WTC11 (cell line): ENCODE measurements at regions of chr10 and their contacts with region 1.

Region 1: GRCh38 chr10:23158370-23158769 is 33.7 kb upstream of the PTF1A start:
- DNase-seq: peak; percentile 56
- ATAC-seq: peak; percentile 80
- H3K4me3 Mint-ChIP-seq: peak overlapping the region; percentile 59
- H3K27ac Mint-ChIP-seq: no peak overlapping the region
- H3K4me1 Mint-ChIP-seq: peaks cover 15% of the 10 kb centered on the region
- H3K27me3 Mint-ChIP-seq: peaks cover 16% of the 10 kb centered on the region
- CTCF ChIP-seq: peak; percentile 88; the same call in 1 of the 2 replicates

Region 2: GRCh38 chr10:23146258-23146657 is 12.1 kb before region 1 on chr10:
- CTCF ChIA-PET with region 1: interaction called, 10 read pairs
- POLR2A ChIA-PET with region 1: no interaction called
- DNase-seq: no peak
- ATAC-seq: peak; percentile 28; the same call in 1 of the 2 replicates
- H3K4me3 Mint-ChIP-seq: no peak overlapping the region
- H3K27ac Mint-ChIP-seq: no peak overlapping the region
- H3K4me1 Mint-ChIP-seq: no peaks in the 10 kb centered on the region
- H3K27me3 Mint-ChIP-seq: no peaks in the 10 kb centered on the region
- CTCF ChIP-seq: no peak

Region 3: DNA sequence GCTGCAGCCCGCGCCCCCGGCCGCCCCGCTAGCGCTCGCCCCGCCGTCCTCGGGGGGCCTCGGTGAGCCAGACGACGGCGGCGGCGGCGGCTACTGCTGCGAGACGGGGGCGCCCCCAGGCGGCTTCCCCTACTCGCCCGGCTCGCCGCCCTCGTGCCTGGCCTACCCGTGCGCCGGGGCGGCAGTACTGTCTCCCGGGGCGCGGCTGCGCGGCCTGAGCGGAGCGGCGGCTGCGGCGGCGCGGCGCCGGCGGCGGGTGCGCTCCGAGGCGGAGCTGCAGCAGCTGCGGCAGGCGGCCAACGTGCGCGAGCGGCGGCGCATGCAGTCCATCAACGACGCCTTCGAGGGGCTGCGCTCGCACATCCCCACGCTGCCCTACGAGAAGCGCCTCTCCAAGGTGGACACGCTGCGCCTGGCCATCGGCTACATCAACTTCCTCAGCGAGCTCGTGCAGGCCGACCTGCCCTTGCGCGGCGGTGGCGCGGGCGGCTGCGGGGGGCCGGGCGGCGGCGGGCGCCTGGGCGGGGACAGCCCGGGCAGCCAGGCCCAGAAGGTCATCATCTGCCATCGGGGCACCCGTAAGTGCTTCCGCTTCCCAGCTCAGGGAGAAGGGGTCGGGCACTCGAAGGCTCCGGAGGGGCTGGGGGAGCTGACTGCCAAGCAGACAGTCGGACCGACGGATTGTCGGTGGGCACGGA is 34.5 kb after region 1 on chr10:
- CTCF ChIA-PET with region 1: interaction called, 21 read pairs
- POLR2A ChIA-PET with region 1: no interaction called
- DNase-seq: peak; percentile 64
- ATAC-seq: peak; percentile 52
- H3K4me3 Mint-ChIP-seq: peak overlapping the region; percentile 51
- H3K27ac Mint-ChIP-seq: no peak overlapping the region
- H3K4me1 Mint-ChIP-seq: peaks cover 40% of the 10 kb centered on the region
- H3K27me3 Mint-ChIP-seq: peaks cover 98% of the 10 kb centered on the region
- CTCF ChIP-seq: no peak

Region 4: DNA sequence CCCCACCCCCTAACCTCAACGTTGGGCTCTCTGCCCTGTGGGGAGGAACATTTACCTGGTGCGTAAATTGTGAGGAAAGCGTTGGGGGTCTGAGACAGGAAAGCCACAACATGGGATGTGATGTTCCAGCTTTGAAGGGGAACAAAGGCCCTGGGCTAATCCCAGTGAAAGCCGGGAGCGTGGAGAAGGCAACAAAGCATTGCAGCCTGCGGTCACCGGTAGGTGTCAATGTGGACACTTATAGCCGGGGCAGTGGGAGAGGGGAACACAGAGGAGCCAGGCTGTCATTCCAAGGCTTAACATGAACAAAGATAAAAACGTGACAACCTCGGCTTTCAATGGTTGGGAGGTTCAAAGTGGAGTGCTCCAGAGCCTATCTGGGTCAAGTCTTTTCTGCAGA is 46.4 kb after region 1 on chr10:
- CTCF ChIA-PET with region 1: interaction called, 13 read pairs
- POLR2A ChIA-PET with region 1: no interaction called
- DNase-seq: peak; percentile 36
- ATAC-seq: peak; percentile 74
- H3K4me3 Mint-ChIP-seq: peak overlapping the region; percentile 30; the same call in 1 of the 2 replicates
- H3K27ac Mint-ChIP-seq: no peak overlapping the region
- H3K4me1 Mint-ChIP-seq: peaks cover 35% of the 10 kb centered on the region
- H3K27me3 Mint-ChIP-seq: peaks cover 67% of the 10 kb centered on the region
- CTCF ChIP-seq: no peak

Region 5: DNA sequence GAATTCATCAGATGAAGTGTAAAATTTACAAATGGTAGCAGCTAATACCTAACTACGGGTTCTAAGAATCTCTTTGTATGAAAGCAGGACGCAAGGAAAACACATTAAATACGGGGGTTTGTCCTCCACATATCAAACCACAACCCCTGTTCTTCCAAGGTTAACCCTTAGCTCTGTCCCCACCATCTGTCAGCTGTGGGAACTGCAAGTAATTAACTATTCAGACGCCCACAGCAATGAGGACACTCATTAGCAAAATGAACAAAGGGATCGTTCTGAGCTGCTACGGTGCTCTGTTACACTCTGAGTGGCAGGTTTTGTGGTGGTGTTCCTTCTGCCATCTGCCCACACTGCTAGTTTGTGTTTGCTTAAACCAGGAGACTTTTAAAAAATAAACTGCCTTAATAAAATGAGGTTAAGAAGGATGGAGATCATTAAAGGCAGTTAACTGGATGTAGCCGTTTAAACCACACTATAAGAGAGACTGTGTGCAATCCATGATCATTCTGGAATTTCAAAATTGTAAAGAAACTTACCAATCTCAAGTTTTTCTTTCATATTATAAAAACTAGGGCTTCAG is 134.9 kb after region 1 on chr10:
- CTCF ChIA-PET with region 1: interaction called, 86 read pairs
- POLR2A ChIA-PET with region 1: interaction called, 3 read pairs
- DNase-seq: peak; percentile 69
- ATAC-seq: peak; percentile 97
- H3K4me3 Mint-ChIP-seq: no peak overlapping the region
- H3K27ac Mint-ChIP-seq: no peak overlapping the region
- H3K4me1 Mint-ChIP-seq: peaks cover 2% of the 10 kb centered on the region
- H3K27me3 Mint-ChIP-seq: no peaks in the 10 kb centered on the region
- CTCF ChIP-seq: peak; percentile 40